BJ (cell line): ENCODE measurements at regions of chr17 and their contacts with region 1.

Region 1: GRCh38 chr17:76397687-76398487 is 13.5 kb downstream of the SPHK1 start:
- DNase-seq: no peak
- H3K4me3 ChIP-seq: no peak overlapping the region
- H3K27me3 ChIP-seq: no peaks in the 10 kb centered on the region
- CTCF ChIP-seq: peak; percentile 96

Region 2: DNA sequence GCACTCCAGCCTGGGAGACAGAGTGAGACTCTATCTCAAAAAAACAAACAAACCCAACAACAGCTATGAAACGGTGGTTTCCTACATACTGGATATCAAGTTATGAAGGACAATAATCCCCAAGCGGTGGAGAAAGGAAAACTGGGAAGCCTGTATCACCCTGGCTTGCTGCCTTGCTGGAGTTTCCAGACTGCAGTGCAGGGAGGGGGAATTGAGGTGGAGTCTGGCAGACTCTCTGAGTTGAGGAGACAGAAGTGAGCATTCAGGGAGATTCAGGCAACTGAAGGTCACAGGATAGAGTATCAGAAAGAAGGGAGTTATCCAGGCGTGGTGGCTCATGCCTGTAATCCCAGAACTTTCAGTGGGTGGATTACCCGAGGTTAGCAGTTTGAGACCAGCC is 101.7 kb before region 1 on chr17:
- CTCF ChIA-PET with region 1: interaction called, 203 read pairs
- POLR2A ChIA-PET with region 1: no interaction called
- DNase-seq: no peak
- H3K4me3 ChIP-seq: no peak overlapping the region
- H3K27me3 ChIP-seq: no peaks in the 10 kb centered on the region
- CTCF ChIP-seq: no peak

Region 3: GRCh38 chr17:76331083-76331482 is 66.8 kb before region 1 on chr17:
- CTCF ChIA-PET with region 1: interaction called, 18 read pairs
- POLR2A ChIA-PET with region 1: no interaction called
- DNase-seq: no peak
- H3K4me3 ChIP-seq: no peak overlapping the region
- H3K27me3 ChIP-seq: no peaks in the 10 kb centered on the region
- CTCF ChIP-seq: no peak

Region 4: DNA sequence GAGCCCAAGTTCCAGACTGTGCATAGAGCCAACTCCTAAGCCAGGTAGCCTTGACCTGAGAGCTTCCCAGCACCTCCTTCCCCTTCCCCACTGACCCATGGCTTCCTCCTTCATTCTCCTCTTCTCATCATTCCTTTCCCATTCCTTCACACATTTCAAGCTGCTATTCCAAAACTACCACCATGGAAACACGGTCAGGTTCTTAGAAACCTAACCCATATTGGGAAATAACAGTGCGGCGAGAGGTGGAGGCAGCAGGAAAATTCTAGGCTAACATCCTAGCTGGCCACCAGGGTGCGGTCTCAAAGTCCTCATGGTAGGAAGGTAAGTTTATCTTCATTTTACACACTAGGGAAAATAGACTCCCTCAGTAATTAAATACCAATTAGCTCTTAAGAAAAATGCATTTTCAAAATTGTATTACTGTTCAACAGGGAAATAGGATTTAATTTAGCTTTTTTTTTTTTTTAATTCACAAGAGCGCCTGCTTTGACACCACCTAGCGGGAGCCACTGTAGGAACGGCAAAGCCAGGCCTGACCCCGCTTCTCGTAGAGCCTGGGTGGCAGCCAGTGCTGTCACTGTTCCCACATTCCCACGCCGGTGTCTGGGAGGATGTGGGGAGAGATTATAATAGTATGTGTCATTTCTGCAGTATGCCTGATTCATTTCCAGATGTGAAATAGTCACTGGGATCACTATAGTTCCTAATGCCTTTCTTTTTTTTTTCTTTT is 27.5 kb before region 1 on chr17:
- CTCF ChIA-PET with region 1: interaction called, 32 read pairs
- POLR2A ChIA-PET with region 1: no interaction called
- DNase-seq: peak; percentile 95
- H3K4me3 ChIP-seq: no peak overlapping the region
- H3K27me3 ChIP-seq: no peaks in the 10 kb centered on the region
- CTCF ChIP-seq: peak; percentile 63

Region 5: GRCh38 chr17:76427501-76428231 is 29.8 kb after region 1 on chr17:
- CTCF ChIA-PET with region 1: interaction called, 16 read pairs
- POLR2A ChIA-PET with region 1: no interaction called
- DNase-seq: no peak
- H3K4me3 ChIP-seq: no peak overlapping the region
- H3K27me3 ChIP-seq: no peaks in the 10 kb centered on the region
- CTCF ChIP-seq: no peak

Region 6: GRCh38 chr17:76458580-76459490 is 60.9 kb after region 1 on chr17:
- CTCF ChIA-PET with region 1: interaction called, 17 read pairs
- POLR2A ChIA-PET with region 1: no interaction called
- DNase-seq: no peak
- H3K4me3 ChIP-seq: no peak overlapping the region
- H3K27me3 ChIP-seq: peaks cover 5% of the 10 kb centered on the region; the same call in 1 of the 2 replicates
- CTCF ChIP-seq: peak; percentile 77